ENCODE measurements at regions of chr2 and their contacts with region 1.

Region 1: GRCh38 chr2:47272031-47272864 is 117.1 kb upstream of the STPG4 start:
- DNase-seq: peak; percentile 86 to 89
- ATAC-seq: peak; percentile 52 to 80
- H3K4me3 ChIP-seq: peak overlapping the region; percentile 41
- H3K27ac ChIP-seq: peak overlapping the region; percentile 85 to 95
- H3K4me1 ChIP-seq: peaks cover 53% of the 10 kb centered on the region
- CTCF ChIP-seq: peak; percentile 99
- EP300 ChIP-seq: 0 out of 5 replicates have a peak, but pooled peaks of 1 of the 2 experiments have one; percentile 25
- POLR2A ChIP-seq: peak; percentile 16; the same call in 1 of the 2 replicates
- RAD21 ChIP-seq: peak; percentile 87 to 99

Region 2: GRCh38 chr2:47016172-47016913 is 255.9 kb before region 1 on chr2:
- CTCF ChIA-PET with region 1: interaction called, 13 read pairs
- POLR2A ChIA-PET with region 1: no interaction called
- DNase-seq: peak; percentile 82 to 84
- ATAC-seq: peak; percentile 79 to 81
- H3K4me3 ChIP-seq: no peak overlapping the region
- H3K27ac ChIP-seq: peak overlapping the region; percentile 18 to 78
- H3K4me1 ChIP-seq: peaks cover 29% of the 10 kb centered on the region
- CTCF ChIP-seq: no peak
- EP300 ChIP-seq: no peak
- POLR2A ChIP-seq: no peak
- RAD21 ChIP-seq: peak; percentile 31 to 50; a peak in 3 of 5 replicates

Region 3: DNA sequence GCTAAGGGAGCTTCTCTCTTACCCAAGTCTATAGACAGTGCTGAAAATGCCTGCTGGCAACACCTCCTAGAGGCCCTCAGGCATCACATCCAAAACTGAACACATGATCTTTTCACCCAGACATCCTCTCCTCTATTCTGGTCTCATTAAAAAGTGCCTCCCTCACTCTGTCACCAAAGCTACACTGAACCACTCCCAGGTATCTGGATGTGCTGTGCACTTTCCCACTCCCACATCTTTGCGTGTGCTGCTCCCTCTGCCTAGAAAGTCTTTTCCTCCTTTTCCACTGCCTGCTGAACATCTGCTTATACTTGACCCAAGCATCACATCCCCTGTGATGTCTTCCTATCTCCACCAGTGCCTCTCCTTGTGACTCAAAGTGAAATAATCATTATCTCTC is 91.1 kb before region 1 on chr2:
- CTCF ChIA-PET with region 1: interaction called, 26 read pairs
- POLR2A ChIA-PET with region 1: no interaction called
- DNase-seq: no peak
- ATAC-seq: no peak
- H3K4me3 ChIP-seq: no peak overlapping the region
- H3K27ac ChIP-seq: peak overlapping the region in 1 of 2 experiments; percentile 13; a peak in 4 of 6 replicates
- H3K4me1 ChIP-seq: peaks cover 28% of the 10 kb centered on the region
- CTCF ChIP-seq: no peak
- EP300 ChIP-seq: no peak
- POLR2A ChIP-seq: no peak
- RAD21 ChIP-seq: no peak

Region 4: DNA sequence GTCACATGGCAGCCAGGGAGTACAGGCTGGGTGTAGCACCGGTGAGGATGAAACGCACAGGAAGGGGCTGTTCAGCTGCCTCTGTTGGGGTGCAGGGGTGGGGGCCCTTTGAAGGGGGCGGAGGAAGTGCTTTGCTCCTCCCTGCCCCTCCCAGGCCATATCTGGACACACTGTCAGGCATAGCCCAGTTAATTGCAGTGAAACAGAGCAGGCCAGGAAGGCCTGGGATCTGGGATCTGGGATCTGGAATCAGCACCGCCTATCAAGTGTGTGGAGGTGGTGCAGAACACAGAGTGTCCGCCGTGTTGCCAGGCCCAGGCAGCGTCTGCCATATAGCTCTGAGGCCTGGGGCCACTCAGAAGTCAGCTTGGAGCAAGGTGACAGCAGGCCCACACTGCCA is 11.4 kb after region 1 on chr2:
- CTCF ChIA-PET with region 1: interaction called, 47 read pairs
- POLR2A ChIA-PET with region 1: no interaction called
- DNase-seq: no peak
- ATAC-seq: no peak
- H3K4me3 ChIP-seq: no peak overlapping the region
- H3K27ac ChIP-seq: peak overlapping the region in 1 of 2 experiments; percentile 52; a peak in 3 of 6 replicates
- H3K4me1 ChIP-seq: peaks cover 20% of the 10 kb centered on the region
- CTCF ChIP-seq: no peak
- EP300 ChIP-seq: no peak
- POLR2A ChIP-seq: no peak
- RAD21 ChIP-seq: no peak

Region 5: DNA sequence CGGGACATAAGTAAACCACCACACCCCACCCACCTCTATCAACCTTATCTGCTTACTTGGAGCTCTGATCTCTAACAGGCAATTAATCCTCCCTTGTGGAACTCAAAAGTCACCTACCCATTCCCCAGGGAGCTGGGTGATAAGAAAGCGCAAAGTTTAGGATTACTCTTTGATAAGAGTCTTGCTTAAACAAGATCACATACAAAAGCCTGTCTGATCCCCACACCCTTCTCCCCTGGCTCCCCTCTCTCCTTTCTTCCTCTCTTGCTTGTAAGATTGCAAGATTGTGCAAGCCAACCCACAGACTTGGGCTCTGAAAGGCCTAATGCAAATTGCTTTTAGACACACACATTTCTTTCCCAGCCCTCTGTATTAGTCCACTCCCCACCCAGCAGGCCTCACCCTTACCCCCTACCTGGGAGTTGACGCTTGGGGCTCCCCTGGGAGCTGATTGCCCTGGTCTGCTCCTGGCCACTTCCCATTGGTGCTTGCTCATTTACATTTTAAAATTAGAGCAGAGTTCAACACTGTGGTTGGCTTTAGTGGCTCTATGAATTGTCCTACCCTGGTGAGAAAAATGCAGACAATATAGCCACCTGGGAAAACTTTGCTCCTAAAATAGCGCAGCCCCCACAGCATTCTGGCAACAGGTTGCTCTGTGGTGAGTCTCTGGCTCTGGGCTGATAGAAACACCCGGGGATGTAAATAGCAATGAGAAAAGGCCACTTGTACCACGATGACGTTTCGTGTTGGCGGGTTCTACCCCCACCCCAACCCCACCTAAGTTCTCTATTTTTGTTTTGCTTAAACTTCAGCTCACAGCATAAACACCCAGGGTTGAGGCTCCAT is 37.9 kb after region 1 on chr2:
- CTCF ChIA-PET with region 1: interaction called, 95 read pairs
- POLR2A ChIA-PET with region 1: no interaction called
- DNase-seq: peak in 1 of 2 experiments; percentile 90
- ATAC-seq: peak; percentile 63 to 66
- H3K4me3 ChIP-seq: no peak overlapping the region
- H3K27ac ChIP-seq: peak overlapping the region; percentile 78 to 83
- H3K4me1 ChIP-seq: peaks cover 73% of the 10 kb centered on the region
- CTCF ChIP-seq: no peak
- EP300 ChIP-seq: peak in 1 of 2 experiments; percentile 30; a peak in 1 of 5 replicates
- POLR2A ChIP-seq: no peak
- RAD21 ChIP-seq: 0 out of 5 replicates have a peak, but pooled peaks of 1 of the 2 experiments have one; percentile 23

Measured in A549 (cell line).